ENCODE measurements at regions of chr9 and their contacts with region 1.

Region 1: DNA sequence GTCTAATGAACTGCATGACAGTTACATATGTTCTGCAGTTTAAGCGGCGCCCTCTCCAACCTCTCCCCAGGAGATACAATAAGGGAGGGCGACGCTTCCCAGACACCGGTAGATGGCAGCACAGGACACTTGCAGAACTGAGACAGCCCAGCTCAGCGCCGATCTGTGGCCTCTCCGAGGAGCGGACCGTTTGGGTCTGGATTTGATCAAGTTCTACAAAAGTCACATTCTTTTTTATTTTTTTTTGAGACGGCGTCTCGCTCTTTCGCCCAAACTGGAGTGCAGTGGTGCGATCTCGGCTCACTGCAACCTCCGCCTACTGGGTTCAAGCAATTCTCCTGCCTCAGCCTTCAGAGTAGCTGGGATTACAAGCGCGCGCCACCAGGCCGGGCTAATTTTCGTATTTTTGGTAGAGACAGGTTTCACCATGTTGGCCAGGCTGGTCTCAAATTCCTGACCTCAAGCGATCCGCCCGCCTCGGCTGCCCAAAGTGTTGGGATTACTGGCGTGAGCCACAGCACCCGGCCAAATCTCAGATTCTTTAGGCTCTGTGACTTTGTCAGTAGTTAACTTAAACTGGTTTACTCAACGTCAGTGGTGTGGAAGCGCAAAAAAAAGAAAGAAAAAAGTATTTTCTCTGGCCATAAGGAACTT is 1.4 kb upstream of the ATOSB start:
- DNase-seq: peak; percentile 91
- H3K4me3 Mint-ChIP-seq: peak overlapping the region; percentile 81
- H3K27ac Mint-ChIP-seq: peak overlapping the region; percentile 91
- H3K4me1 Mint-ChIP-seq: peaks cover 33% of the 10 kb centered on the region
- H3K27me3 Mint-ChIP-seq: no peaks in the 10 kb centered on the region

Region 2: GRCh38 chr9:34989003-34989945 is 127.8 kb before region 1 on chr9 and contains the start of gene DNAJB5:
- CTCF ChIA-PET with region 1: interaction called, 4 read pairs
- POLR2A ChIA-PET with region 1: no interaction called
- intact Hi-C with region 1: loop called (anchors 1 kb)
- DNase-seq: peak; percentile 99
- H3K4me3 Mint-ChIP-seq: peak within 1 kb of the TSS; percentile 89
- H3K27ac Mint-ChIP-seq: peak within 1 kb of the TSS; percentile 89
- H3K4me1 Mint-ChIP-seq: peaks cover 81% of the 10 kb centered on the region
- H3K27me3 Mint-ChIP-seq: no peaks in the 10 kb centered on the region
- total RNA-seq, gene DNAJB5: 11.5 to 12.0 TPM

Region 3: DNA sequence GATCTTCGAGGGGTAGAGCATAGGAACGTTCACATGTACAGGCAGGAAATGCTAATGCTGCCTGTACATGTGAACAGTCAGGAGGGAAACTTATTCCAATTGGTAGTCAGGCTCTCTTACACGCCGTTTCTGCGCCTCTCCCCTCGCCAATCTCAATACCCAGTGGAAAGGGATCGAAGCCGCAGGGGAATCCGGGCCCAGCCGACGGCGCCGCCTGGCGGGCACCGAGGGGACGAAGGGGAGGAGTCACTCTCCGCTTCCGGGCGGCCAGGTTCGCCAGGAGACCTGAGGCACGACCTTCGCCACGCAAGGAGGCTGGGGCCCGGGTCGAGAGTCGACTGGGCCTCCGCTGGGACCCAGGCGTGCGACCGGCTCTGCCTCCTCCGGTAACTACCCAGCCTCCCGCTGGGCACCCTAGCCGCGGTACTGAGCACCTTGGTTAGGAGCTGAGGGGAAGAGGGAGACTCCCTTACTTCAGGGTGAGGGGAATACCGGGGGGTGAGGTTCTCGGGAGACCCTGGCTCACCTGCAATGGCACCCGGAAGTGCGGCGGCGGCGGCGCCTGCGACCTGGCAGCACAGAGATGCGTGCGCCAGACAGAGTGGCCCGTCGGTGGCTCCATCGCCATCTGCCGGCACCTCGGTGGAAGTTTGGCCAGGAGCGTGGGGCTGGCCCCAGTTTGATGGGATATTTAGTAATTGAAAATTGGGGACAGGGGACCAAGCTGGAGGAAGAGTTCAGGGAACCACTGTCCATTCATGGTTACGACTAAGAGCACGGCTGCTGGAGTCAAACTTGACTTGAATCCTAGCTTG is 20.8 kb before region 1 on chr9 and contains the start of gene PIGO:
- CTCF ChIA-PET with region 1: interaction called, 26 read pairs
- POLR2A ChIA-PET with region 1: interaction called, 4 read pairs
- intact Hi-C with region 1: loop called (anchors 1 kb)
- DNase-seq: peak; percentile 93
- H3K4me3 Mint-ChIP-seq: peak within 1 kb of the TSS; percentile 84
- H3K27ac Mint-ChIP-seq: peak within 1 kb of the TSS; percentile 93
- H3K4me1 Mint-ChIP-seq: peaks cover 27% of the 10 kb centered on the region
- H3K27me3 Mint-ChIP-seq: no peaks in the 10 kb centered on the region
- total RNA-seq, gene PIGO: 19.3 to 20.9 TPM

Region 4: GRCh38 chr9:35161713-35162604 is 44.9 kb after region 1 on chr9 and contains the start of gene UNC13B:
- CTCF ChIA-PET with region 1: interaction called, 8 read pairs
- POLR2A ChIA-PET with region 1: no interaction called
- intact Hi-C with region 1: loop called (anchors 1 kb)
- DNase-seq: peak; percentile 85
- H3K4me3 Mint-ChIP-seq: peak within 1 kb of the TSS; percentile 82
- H3K27ac Mint-ChIP-seq: no peak within 1 kb of the TSS
- H3K4me1 Mint-ChIP-seq: peaks cover 23% of the 10 kb centered on the region
- H3K27me3 Mint-ChIP-seq: no peaks in the 10 kb centered on the region
- total RNA-seq, gene UNC13B: 3.6 to 4.6 TPM

Region 5: GRCh38 chr9:35277628-35278359 is 160.8 kb after region 1 on chr9:
- CTCF ChIA-PET with region 1: no interaction called
- POLR2A ChIA-PET with region 1: no interaction called
- intact Hi-C with region 1: loop called (anchors 5 kb)
- DNase-seq: no peak
- H3K4me3 Mint-ChIP-seq: no peak overlapping the region
- H3K27ac Mint-ChIP-seq: no peak overlapping the region
- H3K4me1 Mint-ChIP-seq: peaks cover 29% of the 10 kb centered on the region
- H3K27me3 Mint-ChIP-seq: no peaks in the 10 kb centered on the region

Region 6: DNA sequence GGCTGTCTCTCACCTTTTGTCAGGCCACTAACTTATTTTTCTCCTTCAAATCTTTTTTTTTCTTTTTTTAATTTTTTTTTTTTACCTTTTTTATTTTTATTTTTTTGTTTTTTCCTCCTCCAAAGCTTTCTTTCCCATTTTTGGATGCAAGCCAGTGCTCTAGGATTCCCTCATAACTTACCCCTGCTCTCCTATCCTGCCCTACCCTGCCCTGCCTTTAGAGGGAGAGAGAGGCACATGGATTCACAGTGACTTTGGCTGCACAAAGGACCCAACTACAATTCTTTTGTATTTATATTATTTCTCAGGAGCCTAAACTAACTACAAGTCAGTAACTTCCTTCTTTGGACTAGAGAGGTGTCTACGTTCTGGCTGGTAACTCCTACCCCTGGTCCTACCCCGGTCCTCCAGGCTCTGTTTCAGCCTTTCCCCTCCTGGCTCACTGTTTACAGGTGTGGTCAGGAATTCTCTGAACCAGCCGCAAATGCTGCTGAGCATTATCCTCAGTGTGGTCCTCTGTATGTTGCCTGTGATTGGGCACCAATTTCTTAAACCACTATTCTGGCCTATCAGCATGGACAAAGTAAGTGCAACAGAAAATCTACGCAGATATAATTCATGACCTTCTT is 364.4 kb after region 1 on chr9:
- CTCF ChIA-PET with region 1: interaction called, 60 read pairs
- POLR2A ChIA-PET with region 1: no interaction called
- intact Hi-C with region 1: loop called (anchors 1 kb)
- DNase-seq: peak; percentile 44
- H3K4me3 Mint-ChIP-seq: no peak overlapping the region
- H3K27ac Mint-ChIP-seq: no peak overlapping the region
- H3K4me1 Mint-ChIP-seq: no peaks in the 10 kb centered on the region
- H3K27me3 Mint-ChIP-seq: no peaks in the 10 kb centered on the region